CD4-positive, alpha-beta T cell (primary cell): ENCODE measurements at regions of chr18 and their contacts with region 1.

Region 1: DNA sequence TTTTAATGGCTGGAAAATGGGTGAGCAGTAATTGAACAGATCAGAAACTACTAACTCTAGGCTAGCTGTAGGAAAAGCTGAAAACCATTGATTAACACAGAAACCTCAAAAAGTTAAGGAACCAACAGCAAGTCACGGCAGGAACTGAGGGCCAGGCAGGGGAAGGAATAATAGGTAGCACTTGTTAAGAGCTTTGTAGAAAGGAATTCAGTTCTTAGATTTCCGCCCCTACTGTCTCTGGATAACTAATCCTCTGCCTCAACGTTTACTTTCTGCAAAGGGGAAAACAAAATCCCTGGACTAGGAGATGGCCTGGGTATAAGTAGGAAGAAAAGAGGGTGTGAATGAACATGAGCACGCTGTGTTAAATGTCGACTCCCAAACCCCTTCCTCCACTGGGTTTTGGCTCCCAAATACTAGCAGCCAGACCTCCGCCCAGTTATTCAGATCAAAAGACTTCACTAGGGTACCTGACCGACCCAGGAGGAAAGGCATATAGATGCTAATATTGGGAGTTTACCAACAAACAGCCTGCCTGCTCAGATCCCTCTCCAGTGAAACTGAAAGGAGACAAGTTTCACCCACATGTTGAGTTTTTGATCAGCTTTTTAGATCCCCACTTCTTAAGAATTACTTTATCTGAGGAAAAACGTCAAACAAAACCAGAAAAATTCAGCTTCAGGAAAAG is 12.4 kb downstream of the SMAD2 start:
- DNase-seq: no peak
- ATAC-seq: no peak
- H3K4me3 ChIP-seq: no peak overlapping the region
- H3K4me3 Mint-ChIP-seq: peak overlapping the region; percentile 12
- H3K27ac ChIP-seq: no peak overlapping the region
- H3K27ac Mint-ChIP-seq: peak overlapping the region; percentile 66
- H3K4me1 ChIP-seq: peaks cover 22% of the 10 kb centered on the region
- H3K4me1 Mint-ChIP-seq: peaks cover 94% of the 10 kb centered on the region
- H3K27me3 ChIP-seq: no peaks in the 10 kb centered on the region
- H3K27me3 Mint-ChIP-seq: no peaks in the 10 kb centered on the region
- CTCF ChIP-seq: no peak

Region 2: GRCh38 chr18:47595815-47596496 is 322.1 kb before region 1 on chr18:
- CTCF ChIA-PET with region 1: no interaction called
- POLR2A ChIA-PET with region 1: no interaction called
- intact Hi-C with region 1: no loop called
- DNase-seq: peak in 2 of 14 experiments; percentile 2 to 7
- ATAC-seq: no peak
- H3K4me3 ChIP-seq: no peak overlapping the region
- H3K4me3 Mint-ChIP-seq: no peak overlapping the region
- H3K27ac ChIP-seq: no peak overlapping the region
- H3K27ac Mint-ChIP-seq: no peak overlapping the region
- H3K4me1 ChIP-seq: no peaks in the 10 kb centered on the region
- H3K4me1 Mint-ChIP-seq: no peaks in the 10 kb centered on the region
- H3K27me3 ChIP-seq: peaks cover 10 to 14% of the 10 kb centered on the region in 2 experiments
- H3K27me3 Mint-ChIP-seq: peaks cover 53% of the 10 kb centered on the region
- CTCF ChIP-seq: no peak

Region 3: GRCh38 chr18:47883771-47884413 is 34.2 kb before region 1 on chr18:
- CTCF ChIA-PET with region 1: interaction called, 3 read pairs
- POLR2A ChIA-PET with region 1: no interaction called
- intact Hi-C with region 1: loop called in 1 of 2 experiments (anchors 5 kb)
- DNase-seq: peak in 1 of 14 experiments; percentile 22
- ATAC-seq: no peak
- H3K4me3 ChIP-seq: no peak overlapping the region
- H3K4me3 Mint-ChIP-seq: no peak overlapping the region
- H3K27ac ChIP-seq: no peak overlapping the region
- H3K27ac Mint-ChIP-seq: peak overlapping the region; percentile 50
- H3K4me1 ChIP-seq: no peaks in the 10 kb centered on the region
- H3K4me1 Mint-ChIP-seq: peaks cover 64% of the 10 kb centered on the region
- H3K27me3 ChIP-seq: no peaks in the 10 kb centered on the region
- H3K27me3 Mint-ChIP-seq: no peaks in the 10 kb centered on the region
- CTCF ChIP-seq: no peak

Region 4: GRCh38 chr18:48263913-48264902 is 346.1 kb after region 1 on chr18:
- CTCF ChIA-PET with region 1: no interaction called
- POLR2A ChIA-PET with region 1: no interaction called
- intact Hi-C with region 1: no loop called
- DNase-seq: no peak
- ATAC-seq: no peak
- H3K4me3 ChIP-seq: no peak overlapping the region
- H3K4me3 Mint-ChIP-seq: no peak overlapping the region
- H3K27ac ChIP-seq: no peak overlapping the region
- H3K27ac Mint-ChIP-seq: no peak overlapping the region
- H3K4me1 ChIP-seq: no peaks in the 10 kb centered on the region
- H3K4me1 Mint-ChIP-seq: no peaks in the 10 kb centered on the region
- H3K27me3 ChIP-seq: peaks cover 0 to 4% of the 10 kb centered on the region in 2 experiments
- H3K27me3 Mint-ChIP-seq: peaks cover 28% of the 10 kb centered on the region
- CTCF ChIP-seq: no peak